Naive thymus-derived CD4-positive, alpha-beta T cell (primary cell): ENCODE measurements at regions of chr11 and their contacts with region 1.

Region 1: GRCh38 chr11:67353317-67354074 is at the start of gene POLD4:
- DNase-seq: peak; percentile 91 to 97 (median 95)
- ATAC-seq: peak; percentile 93
- H3K4me3 ChIP-seq: peak within 1 kb of the TSS; percentile 96
- H3K4me3 Mint-ChIP-seq: peak within 1 kb of the TSS; percentile 85 to 100 (median 97)
- H3K27ac ChIP-seq: peak within 1 kb of the TSS; percentile 97
- H3K27ac Mint-ChIP-seq: peak within 1 kb of the TSS; percentile 97 to 100 (median 99)
- H3K4me1 ChIP-seq: peaks cover 30 to 45% of the 10 kb centered on the region in 2 donors
- H3K4me1 Mint-ChIP-seq: peaks cover 31 to 64% (median 50%) of the 10 kb centered on the region in 7 donors
- H3K27me3 ChIP-seq: no peaks in the 10 kb centered on the region
- H3K27me3 Mint-ChIP-seq: peaks cover 0 to 5% (median 0%) of the 10 kb centered on the region in 5 donors
- total RNA-seq, gene POLD4: 59.9 to 104 (median 76.1) TPM

Region 2: GRCh38 chr11:67239783-67240575 is 113.5 kb before region 1 on chr11:
- CTCF ChIA-PET with region 1: interaction called, 7 read pairs
- POLR2A ChIA-PET with region 1: interaction called, 27 read pairs
- intact Hi-C with region 1: no loop called
- DNase-seq: peak; percentile 81 to 99 (median 98)
- ATAC-seq: peak; percentile 94
- H3K4me3 ChIP-seq: peak overlapping the region; percentile 89
- H3K4me3 Mint-ChIP-seq: peak overlapping the region; percentile 93 to 100 (median 98)
- H3K27ac ChIP-seq: peak overlapping the region; percentile 97
- H3K27ac Mint-ChIP-seq: peak overlapping the region; percentile 92 to 100 (median 99)
- H3K4me1 ChIP-seq: peaks cover 24 to 41% of the 10 kb centered on the region in 2 donors
- H3K4me1 Mint-ChIP-seq: peaks cover 47 to 62% (median 61%) of the 10 kb centered on the region in 7 donors
- H3K27me3 ChIP-seq: no peaks in the 10 kb centered on the region
- H3K27me3 Mint-ChIP-seq: no peaks in the 10 kb centered on the region

Region 3: DNA sequence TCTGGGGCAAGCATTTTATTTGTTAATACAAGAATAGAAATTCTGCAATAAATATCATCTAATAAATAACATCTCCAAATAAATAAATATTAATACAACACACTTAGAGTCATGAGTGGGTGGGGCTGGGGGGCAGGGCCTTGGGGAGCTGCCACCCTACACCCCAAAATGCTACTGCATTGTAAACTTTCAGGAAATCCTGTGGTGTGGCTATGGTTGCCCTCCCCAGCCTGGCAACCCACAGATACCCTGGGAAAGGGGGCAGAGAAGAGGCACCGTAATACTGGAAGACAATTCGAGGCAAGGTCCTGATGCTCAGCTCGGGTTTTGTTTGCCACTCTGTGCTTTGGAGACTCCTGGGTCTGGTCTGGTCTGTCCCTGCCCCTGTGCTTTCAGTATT is 10.7 kb after region 1 on chr11:
- CTCF ChIA-PET with region 1: interaction called, 495 read pairs
- POLR2A ChIA-PET with region 1: interaction called, 272 read pairs
- intact Hi-C with region 1: no loop called
- DNase-seq: no peak
- ATAC-seq: no peak
- H3K4me3 ChIP-seq: no peak overlapping the region
- H3K4me3 Mint-ChIP-seq: peak overlapping the region in 3 of 10 donors; percentile 1 to 65 (median 40)
- H3K27ac ChIP-seq: no peak overlapping the region
- H3K27ac Mint-ChIP-seq: no peak overlapping the region
- H3K4me1 ChIP-seq: peaks cover 11 to 33% of the 10 kb centered on the region in 2 donors
- H3K4me1 Mint-ChIP-seq: peaks cover 15 to 45% (median 29%) of the 10 kb centered on the region in 7 donors
- H3K27me3 ChIP-seq: no peaks in the 10 kb centered on the region
- H3K27me3 Mint-ChIP-seq: peaks cover 0 to 52% (median 3%) of the 10 kb centered on the region in 5 donors

Region 4: GRCh38 chr11:67401495-67402191 is 48.1 kb after region 1 on chr11 and contains the start of gene PPP1CA:
- CTCF ChIA-PET with region 1: interaction called, 5 read pairs
- POLR2A ChIA-PET with region 1: interaction called, 25 read pairs
- intact Hi-C with region 1: loop called in 1 of 2 experiments (anchors 1 kb)
- DNase-seq: peak; percentile 87 to 99 (median 92)
- ATAC-seq: peak; percentile 93
- H3K4me3 ChIP-seq: peak within 1 kb of the TSS; percentile 98
- H3K4me3 Mint-ChIP-seq: peak within 1 kb of the TSS; percentile 90 to 100 (median 96)
- H3K27ac ChIP-seq: peak within 1 kb of the TSS; percentile 87
- H3K27ac Mint-ChIP-seq: peak within 1 kb of the TSS; percentile 81 to 97 (median 95)
- H3K4me1 ChIP-seq: peaks cover 55 to 63% of the 10 kb centered on the region in 2 donors
- H3K4me1 Mint-ChIP-seq: peaks cover 22 to 59% (median 52%) of the 10 kb centered on the region in 7 donors
- H3K27me3 ChIP-seq: no peaks in the 10 kb centered on the region
- H3K27me3 Mint-ChIP-seq: no peaks in the 10 kb centered on the region
- total RNA-seq, gene PPP1CA: 83.0 to 339 (median 122) TPM

Region 5: DNA sequence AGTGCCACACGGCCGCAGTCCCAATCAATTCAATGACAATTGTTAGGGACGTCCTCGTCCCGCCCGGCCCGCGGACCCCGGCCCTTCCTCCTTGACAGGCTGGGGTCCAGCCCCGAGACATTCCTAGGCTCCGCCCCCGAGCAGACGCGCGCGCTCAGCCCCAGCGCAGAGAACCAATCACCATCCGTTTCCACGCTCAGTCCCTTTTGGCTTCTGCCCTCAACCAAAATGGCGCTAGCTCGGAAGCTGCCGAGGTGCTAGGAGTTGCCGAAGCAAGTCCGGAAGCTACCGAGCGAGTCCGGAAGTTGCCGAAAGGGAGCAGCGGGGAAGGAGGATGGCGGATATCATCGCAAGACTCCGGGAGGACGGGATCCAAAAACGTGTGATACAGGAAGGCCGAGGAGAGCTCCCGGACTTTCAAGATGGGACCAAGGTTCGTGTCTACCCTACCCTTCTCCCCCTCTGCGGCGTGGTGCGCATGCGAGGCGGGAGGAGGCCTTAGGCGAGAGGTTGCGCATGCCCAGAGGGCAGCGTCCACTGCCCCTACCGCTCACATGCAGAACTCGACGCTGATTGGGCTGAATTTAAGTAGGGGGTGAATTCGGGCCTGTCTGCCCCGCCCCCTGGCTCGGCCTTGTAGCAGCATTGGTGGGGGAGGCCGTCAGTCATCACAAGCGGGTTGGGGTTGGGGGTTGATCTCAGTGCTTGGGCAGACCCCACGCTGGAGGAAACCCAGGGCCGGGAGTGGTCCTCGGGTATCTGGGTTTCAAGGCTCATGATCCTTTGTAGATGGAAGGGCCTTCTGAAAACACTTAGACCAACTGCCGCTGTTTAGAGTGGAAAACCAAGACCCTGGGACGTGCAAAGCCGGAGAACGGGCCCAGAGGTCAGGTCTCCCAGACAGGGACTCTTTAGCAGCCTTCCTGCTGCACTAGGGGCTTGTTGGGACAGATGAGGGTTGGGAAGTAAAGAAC is 129.6 kb after region 1 on chr11 and contains the start of gene AIP:
- CTCF ChIA-PET with region 1: interaction called, 3 read pairs
- POLR2A ChIA-PET with region 1: interaction called, 17 read pairs
- intact Hi-C with region 1: loop called (anchors 1 kb)
- DNase-seq: peak; percentile 88 to 99 (median 98)
- ATAC-seq: peak; percentile 89
- H3K4me3 ChIP-seq: peak within 1 kb of the TSS; percentile 80
- H3K4me3 Mint-ChIP-seq: peak within 1 kb of the TSS; percentile 90 to 100 (median 96)
- H3K27ac ChIP-seq: peak within 1 kb of the TSS; percentile 80
- H3K27ac Mint-ChIP-seq: peak within 1 kb of the TSS; percentile 95 to 100 (median 99)
- H3K4me1 ChIP-seq: peaks cover 40 to 42% of the 10 kb centered on the region in 2 donors
- H3K4me1 Mint-ChIP-seq: peaks cover 40 to 57% (median 51%) of the 10 kb centered on the region in 7 donors
- H3K27me3 ChIP-seq: no peaks in the 10 kb centered on the region
- H3K27me3 Mint-ChIP-seq: peaks cover 0 to 5% (median 0%) of the 10 kb centered on the region in 5 donors
- total RNA-seq, gene AIP: 107 to 156 (median 137) TPM

Region 6: GRCh38 chr11:67656278-67656922 is 302.9 kb after region 1 on chr11:
- CTCF ChIA-PET with region 1: no interaction called
- POLR2A ChIA-PET with region 1: no interaction called
- intact Hi-C with region 1: loop called in 1 of 2 experiments (anchors 1 kb)
- DNase-seq: no peak
- ATAC-seq: no peak
- H3K4me3 ChIP-seq: no peak overlapping the region
- H3K4me3 Mint-ChIP-seq: no peak overlapping the region
- H3K27ac ChIP-seq: no peak overlapping the region
- H3K27ac Mint-ChIP-seq: peak overlapping the region in 1 of 9 donors; percentile 49
- H3K4me1 ChIP-seq: no peaks in the 10 kb centered on the region
- H3K4me1 Mint-ChIP-seq: peaks cover 0 to 5% (median 0%) of the 10 kb centered on the region in 7 donors
- H3K27me3 ChIP-seq: no peaks in the 10 kb centered on the region
- H3K27me3 Mint-ChIP-seq: peaks cover 0 to 17% (median 0%) of the 10 kb centered on the region in 5 donors